WTC11 (cell line): ENCODE measurements at regions of chr17 and their contacts with region 1.

Region 1: GRCh38 chr17:39980351-39981206 is at the start of gene PSMD3:
- DNase-seq: peak; percentile 98
- ATAC-seq: peak; percentile 94
- H3K4me3 Mint-ChIP-seq: peak within 1 kb of the TSS; percentile 89
- H3K27ac Mint-ChIP-seq: peak within 1 kb of the TSS; percentile 97
- H3K4me1 Mint-ChIP-seq: peaks cover 25% of the 10 kb centered on the region
- H3K27me3 Mint-ChIP-seq: no peaks in the 10 kb centered on the region
- CTCF ChIP-seq: peak; percentile 52
- total RNA-seq, gene PSMD3: 157 to 190 TPM (median 158 TPM) in 3 replicates

Region 2: GRCh38 chr17:39952680-39953470 is 27.7 kb before region 1 on chr17:
- CTCF ChIA-PET with region 1: interaction called, 50 read pairs
- POLR2A ChIA-PET with region 1: interaction called, 9 read pairs
- DNase-seq: peak; percentile 100
- ATAC-seq: peak; percentile 93
- H3K4me3 Mint-ChIP-seq: peak overlapping the region; percentile 78
- H3K27ac Mint-ChIP-seq: peak overlapping the region; percentile 97
- H3K4me1 Mint-ChIP-seq: peaks cover 21% of the 10 kb centered on the region
- H3K27me3 Mint-ChIP-seq: peaks cover 17% of the 10 kb centered on the region
- CTCF ChIP-seq: no peak

Region 3: DNA sequence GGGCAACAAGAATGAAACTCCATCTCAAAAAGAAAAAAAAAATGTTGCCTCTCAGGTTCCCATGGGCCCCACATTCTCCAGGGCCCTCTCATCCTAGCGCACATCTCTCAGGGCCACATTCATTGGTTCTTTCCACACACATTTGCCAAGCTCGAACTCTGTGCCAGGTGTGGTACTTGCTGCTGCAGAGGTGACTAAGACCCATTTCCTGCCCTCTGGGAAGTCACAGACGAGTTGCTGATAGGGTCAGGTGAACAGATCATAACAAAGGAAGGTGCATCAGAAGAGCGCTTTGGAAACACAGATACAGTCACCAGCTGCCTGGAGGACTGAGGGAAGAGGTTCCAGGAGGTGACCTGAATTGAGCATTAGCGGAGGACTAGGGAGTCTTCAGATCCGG is 16.8 kb before region 1 on chr17:
- CTCF ChIA-PET with region 1: interaction called, 50 read pairs
- POLR2A ChIA-PET with region 1: interaction called, 6 read pairs
- DNase-seq: no peak
- ATAC-seq: no peak
- H3K4me3 Mint-ChIP-seq: no peak overlapping the region
- H3K27ac Mint-ChIP-seq: no peak overlapping the region
- H3K4me1 Mint-ChIP-seq: peaks cover 9% of the 10 kb centered on the region
- H3K27me3 Mint-ChIP-seq: peaks cover 5% of the 10 kb centered on the region; the same call in 1 of the 2 replicates
- CTCF ChIP-seq: no peak